ENCODE measurements at regions of chr17 and their contacts with region 1.

Region 1: GRCh38 chr17:996554-997344 is at the start of gene TIMM22:
- H3K4me3 ChIP-seq: peak within 1 kb of the TSS; percentile 67
- H3K27ac ChIP-seq: peak within 1 kb of the TSS; percentile 93
- H3K4me1 ChIP-seq: peaks cover 14% of the 10 kb centered on the region
- CTCF ChIP-seq: peak; percentile 99

Region 2: DNA sequence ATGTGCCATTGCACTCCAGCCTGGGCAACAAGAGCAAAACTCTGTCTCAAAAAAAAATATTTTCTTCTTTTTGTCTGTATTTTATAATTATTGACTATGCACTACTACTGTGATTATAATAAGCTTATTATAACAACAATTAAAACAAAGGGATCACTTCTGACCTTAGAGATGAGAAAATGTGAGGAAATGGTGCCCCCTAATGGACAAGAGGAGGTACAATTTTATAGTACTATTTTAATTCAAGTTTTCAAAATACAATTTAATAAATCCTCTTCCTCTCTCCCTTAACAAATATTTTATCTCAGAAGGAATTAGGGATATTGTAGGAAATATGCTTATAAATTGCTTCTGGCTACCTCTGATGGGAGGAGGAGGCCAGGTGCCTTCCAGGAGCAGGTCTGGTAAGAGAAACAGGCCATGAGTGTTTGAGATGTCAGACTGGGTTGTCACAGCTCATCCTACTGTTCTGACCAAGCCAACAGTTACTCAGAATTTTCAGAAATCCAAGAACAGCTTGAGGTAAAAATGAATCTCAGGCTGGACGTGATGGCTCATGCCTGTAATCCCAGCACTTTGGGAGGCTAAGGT is 296.1 kb before region 1 on chr17:
- CTCF ChIA-PET with region 1: interaction called, 10 read pairs
- POLR2A ChIA-PET with region 1: no interaction called
- H3K4me3 ChIP-seq: no peak overlapping the region
- H3K27ac ChIP-seq: no peak overlapping the region
- H3K4me1 ChIP-seq: no peaks in the 10 kb centered on the region
- CTCF ChIP-seq: 0 out of 2 replicates have a peak, but pooled peaks have one; percentile 34

Region 3: DNA sequence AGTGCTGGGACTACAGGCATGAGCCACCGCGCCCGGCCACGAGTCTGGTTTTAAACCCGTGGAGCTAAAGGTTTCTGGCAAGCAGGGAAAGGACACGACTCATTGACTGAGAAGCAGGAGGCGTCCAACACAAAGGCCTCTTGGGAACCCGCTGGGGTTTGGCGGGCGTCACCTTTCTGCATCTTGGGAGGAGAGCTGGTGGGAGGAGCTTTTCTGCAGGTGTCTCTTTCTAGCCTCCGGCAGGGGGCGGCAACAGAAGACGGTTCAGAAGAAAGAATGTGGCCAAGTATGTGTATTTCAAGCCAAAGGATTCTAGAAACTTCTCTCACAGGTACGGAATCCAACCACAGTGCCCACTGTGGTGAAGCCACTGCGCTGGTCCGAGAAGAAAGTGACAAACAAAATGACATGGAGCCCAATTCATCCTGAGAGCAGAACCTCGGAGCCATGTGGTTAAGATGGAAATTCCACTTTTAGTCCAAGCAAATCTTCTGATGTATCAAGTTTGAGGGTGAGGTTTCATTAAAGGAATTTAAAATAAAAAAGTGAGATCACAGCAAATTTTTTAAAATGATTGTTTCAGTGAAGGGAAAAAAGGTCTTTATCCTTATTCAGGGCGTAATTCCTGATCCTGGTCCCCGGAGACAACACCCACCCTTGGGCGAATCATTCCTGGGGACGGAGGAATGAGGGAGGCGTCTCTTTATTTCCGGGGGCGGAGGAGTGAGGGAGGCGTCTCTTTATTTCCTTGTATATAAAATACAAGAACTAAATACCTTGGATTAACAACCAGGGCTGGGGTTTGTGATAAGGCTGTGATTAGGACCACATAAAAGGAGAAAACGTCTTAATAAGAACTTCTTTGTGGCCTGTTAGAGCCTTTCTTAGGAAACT is 117.0 kb before region 1 on chr17:
- CTCF ChIA-PET with region 1: interaction called, 18 read pairs
- POLR2A ChIA-PET with region 1: interaction called, 3 read pairs
- H3K4me3 ChIP-seq: no peak overlapping the region
- H3K27ac ChIP-seq: no peak overlapping the region
- H3K4me1 ChIP-seq: peaks cover 17% of the 10 kb centered on the region
- CTCF ChIP-seq: peak; percentile 64

Region 4: GRCh38 chr17:1055751-1056645 is 59.2 kb after region 1 on chr17:
- CTCF ChIA-PET with region 1: interaction called, 48 read pairs
- POLR2A ChIA-PET with region 1: interaction called, 5 read pairs
- H3K4me3 ChIP-seq: no peak overlapping the region
- H3K27ac ChIP-seq: 0 out of 2 replicates have a peak overlapping the region, but pooled peaks have one; percentile 41
- H3K4me1 ChIP-seq: no peaks in the 10 kb centered on the region
- CTCF ChIP-seq: peak; percentile 77

Region 5: GRCh38 chr17:1137465-1137894 is 140.7 kb after region 1 on chr17:
- CTCF ChIA-PET with region 1: no interaction called
- POLR2A ChIA-PET with region 1: no interaction called
- H3K4me3 ChIP-seq: no peak overlapping the region
- H3K27ac ChIP-seq: no peak overlapping the region
- H3K4me1 ChIP-seq: peaks cover 7% of the 10 kb centered on the region
- CTCF ChIP-seq: no peak

Measured in HEK293 (cell line).